HCT116 (cell line): ENCODE measurements at regions of chr15 and their contacts with region 1.

Region 1: DNA sequence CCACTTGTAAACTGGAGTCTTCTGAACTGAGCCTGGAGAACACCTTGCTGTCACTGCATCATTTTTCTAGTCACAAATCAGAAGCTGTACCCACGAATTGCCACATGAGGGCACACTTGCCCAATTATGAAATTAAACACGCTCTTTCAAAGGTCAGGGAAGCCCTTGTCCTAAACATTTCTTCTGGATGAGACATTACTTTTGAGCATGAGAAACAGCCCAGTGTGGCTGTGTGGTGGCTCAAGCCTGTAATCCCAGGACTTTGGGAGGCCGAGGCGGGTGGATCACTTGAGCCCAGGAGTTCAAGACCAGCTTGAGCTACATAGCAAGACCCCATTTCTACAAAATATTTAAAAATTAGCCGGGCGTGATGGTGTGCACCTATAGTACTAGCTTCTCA is 27.5 kb upstream of the CFAP161 start:
- DNase-seq: peak; percentile 60
- ATAC-seq: peak; percentile 81
- H3K4me3 ChIP-seq: no peak overlapping the region
- H3K27ac ChIP-seq: no peak overlapping the region
- H3K4me1 ChIP-seq: peaks cover 0 to 5% of the 10 kb centered on the region in 2 experiments; a peak in 1 of 4 replicates
- H3K27me3 ChIP-seq: peaks cover 19% of the 10 kb centered on the region
- CTCF ChIP-seq: peak; percentile 70 to 75 (median 72)
- POLR2A ChIP-seq: no peak
- RAD21 ChIP-seq: peak; percentile 87

Region 2: GRCh38 chr15:80455668-80456442 is 650.7 kb before region 1 on chr15:
- CTCF ChIA-PET with region 1: no interaction called
- POLR2A ChIA-PET with region 1: no interaction called
- RAD21 ChIA-PET with region 1: no interaction called
- intact Hi-C with region 1: loop called (anchors 5 kb)
- DNase-seq: peak; percentile 44
- ATAC-seq: peak; percentile 89
- H3K4me3 ChIP-seq: no peak overlapping the region
- H3K27ac ChIP-seq: no peak overlapping the region
- H3K4me1 ChIP-seq: peaks cover 4 to 8% of the 10 kb centered on the region in 2 experiments; a peak in 3 of 4 replicates
- H3K27me3 ChIP-seq: no peaks in the 10 kb centered on the region
- CTCF ChIP-seq: peak; percentile 88 to 95 (median 89)
- POLR2A ChIP-seq: no peak
- RAD21 ChIP-seq: peak; percentile 94

Region 3: DNA sequence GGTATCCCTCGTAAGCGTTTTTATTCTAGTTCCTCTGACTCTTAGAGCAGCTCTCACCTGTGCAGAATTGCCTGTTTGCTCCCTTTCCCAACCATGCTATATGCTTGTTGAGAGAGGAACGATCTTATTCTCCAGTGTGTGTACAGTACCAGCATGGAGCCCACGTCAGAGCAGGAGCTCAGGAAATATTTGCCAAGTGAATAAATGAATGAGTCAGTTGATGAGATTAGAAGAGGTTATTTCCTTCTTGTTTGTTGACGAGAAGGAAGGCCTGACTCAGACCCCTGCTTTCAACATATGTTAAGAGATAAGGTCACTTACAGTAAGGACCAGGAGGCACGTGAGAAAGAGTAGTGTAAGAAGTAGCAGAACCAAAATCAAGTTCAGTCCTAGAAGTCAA is 517.8 kb before region 1 on chr15:
- CTCF ChIA-PET with region 1: no interaction called
- POLR2A ChIA-PET with region 1: no interaction called
- RAD21 ChIA-PET with region 1: no interaction called
- intact Hi-C with region 1: no loop called
- DNase-seq: no peak
- ATAC-seq: no peak
- H3K4me3 ChIP-seq: no peak overlapping the region
- H3K27ac ChIP-seq: no peak overlapping the region
- H3K4me1 ChIP-seq: peaks cover 5 to 34% of the 10 kb centered on the region in 2 experiments; a peak in 3 of 4 replicates
- H3K27me3 ChIP-seq: no peaks in the 10 kb centered on the region
- CTCF ChIP-seq: no peak
- POLR2A ChIP-seq: no peak
- RAD21 ChIP-seq: no peak

Region 4: DNA sequence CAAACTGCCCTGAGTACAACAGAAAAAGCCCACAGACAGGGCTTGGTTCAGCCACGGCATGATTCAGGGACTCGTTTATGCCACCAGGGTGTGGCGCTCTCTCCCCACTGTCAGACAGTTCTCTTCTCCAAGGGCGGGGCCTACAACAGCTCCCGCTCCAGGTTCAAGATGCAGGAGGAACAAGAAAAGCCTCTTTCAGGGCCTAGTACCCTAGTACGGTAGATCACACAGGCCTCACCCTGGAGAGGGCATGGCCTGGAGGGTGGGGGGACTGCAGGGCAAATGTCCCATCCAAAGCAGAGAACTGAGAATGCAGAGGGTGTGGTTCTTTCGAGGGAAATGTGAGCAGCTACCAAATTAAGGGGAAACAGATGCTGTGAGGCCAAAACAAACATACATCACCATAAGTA is 128.9 kb before region 1 on chr15:
- CTCF ChIA-PET with region 1: interaction called, 10 read pairs
- POLR2A ChIA-PET with region 1: no interaction called
- RAD21 ChIA-PET with region 1: interaction called in 1 of 2 experiments, 3 read pairs
- intact Hi-C with region 1: loop called (anchors 1 kb)
- DNase-seq: no peak
- ATAC-seq: peak; percentile 97
- H3K4me3 ChIP-seq: no peak overlapping the region
- H3K27ac ChIP-seq: no peak overlapping the region
- H3K4me1 ChIP-seq: peaks cover 8 to 22% of the 10 kb centered on the region in 2 experiments; a peak in 2 of 4 replicates
- H3K27me3 ChIP-seq: no peaks in the 10 kb centered on the region
- CTCF ChIP-seq: peak; percentile 70 to 81 (median 72); a peak in 5 of 6 replicates
- POLR2A ChIP-seq: no peak
- RAD21 ChIP-seq: peak; percentile 82

Region 5: DNA sequence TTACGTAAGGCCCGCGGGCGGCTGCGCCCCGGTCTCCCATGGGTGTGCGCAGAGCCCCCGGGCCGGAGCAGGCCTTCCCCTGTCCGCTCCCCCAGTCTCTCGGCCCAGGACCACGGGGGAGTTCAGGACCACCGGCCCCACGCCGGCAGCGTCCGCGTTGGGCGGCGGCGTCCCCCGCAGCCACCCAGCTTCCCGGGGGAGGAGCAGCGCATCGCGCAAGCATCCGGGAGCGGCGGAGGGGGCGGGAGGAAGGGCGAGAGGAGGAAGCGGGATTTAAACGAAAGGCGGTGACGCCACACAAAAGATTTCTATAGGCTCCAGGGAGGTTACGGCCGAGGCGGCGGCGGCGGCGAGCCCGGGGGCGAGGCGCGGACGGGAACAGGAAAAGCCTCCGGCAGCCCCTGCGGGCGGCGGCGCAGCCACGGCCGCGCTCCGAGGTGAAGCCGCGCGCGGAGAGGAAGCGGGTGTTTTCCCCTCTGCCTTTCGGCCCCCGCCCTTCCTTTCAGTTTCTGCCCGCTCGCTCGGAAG is 105.9 kb before region 1 on chr15 and contains the start of gene TLNRD1:
- CTCF ChIA-PET with region 1: no interaction called
- POLR2A ChIA-PET with region 1: no interaction called
- RAD21 ChIA-PET with region 1: no interaction called
- intact Hi-C with region 1: loop called (anchors 5 kb)
- DNase-seq: peak; percentile 80
- ATAC-seq: peak; percentile 78
- H3K4me3 ChIP-seq: peak within 1 kb of the TSS; percentile 66 to 77
- H3K27ac ChIP-seq: peak within 1 kb of the TSS; percentile 90
- H3K4me1 ChIP-seq: peaks cover 15 to 36% of the 10 kb centered on the region in 2 experiments
- H3K27me3 ChIP-seq: no peaks in the 10 kb centered on the region
- CTCF ChIP-seq: no peak
- POLR2A ChIP-seq: peak; percentile 84
- RAD21 ChIP-seq: no peak
- total RNA-seq, gene TLNRD1: 22.5 TPM

Region 6: GRCh38 chr15:81091889-81092558 is 14.5 kb before region 1 on chr15:
- CTCF ChIA-PET with region 1: interaction called, 12 read pairs
- POLR2A ChIA-PET with region 1: interaction called, 3 read pairs
- RAD21 ChIA-PET with region 1: interaction called in 1 of 2 experiments, 6 read pairs
- intact Hi-C with region 1: no loop called
- DNase-seq: peak; percentile 86
- ATAC-seq: peak; percentile 95
- H3K4me3 ChIP-seq: peak overlapping the region; percentile 20 to 49
- H3K27ac ChIP-seq: peak overlapping the region; percentile 87
- H3K4me1 ChIP-seq: peaks cover 12 to 16% of the 10 kb centered on the region in 2 experiments
- H3K27me3 ChIP-seq: no peaks in the 10 kb centered on the region
- CTCF ChIP-seq: no peak
- POLR2A ChIP-seq: no peak
- RAD21 ChIP-seq: peak; percentile 36; the same call in 1 of the 2 replicates

Region 7: DNA sequence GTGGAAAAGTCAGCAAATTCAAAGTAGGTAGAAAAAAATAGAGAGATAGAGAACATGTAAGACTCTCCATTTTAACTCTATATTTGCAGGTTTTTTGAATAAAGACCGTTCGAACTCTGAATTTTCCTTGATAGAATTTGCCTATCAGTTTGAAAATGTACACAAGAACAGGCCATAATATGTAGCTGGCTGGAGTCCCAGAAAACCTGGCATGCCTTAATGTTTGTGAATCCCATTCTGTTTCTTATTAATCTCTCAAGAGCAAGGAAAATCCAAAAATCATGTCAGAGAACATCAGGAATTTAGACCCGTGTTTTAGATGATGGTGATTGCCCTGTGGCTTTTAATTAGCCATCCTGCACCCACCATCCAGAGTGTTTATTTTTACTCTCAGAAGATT is 20.3 kb after region 1 on chr15:
- CTCF ChIA-PET with region 1: no interaction called
- POLR2A ChIA-PET with region 1: no interaction called
- RAD21 ChIA-PET with region 1: no interaction called
- intact Hi-C with region 1: no loop called
- DNase-seq: no peak
- ATAC-seq: no peak
- H3K4me3 ChIP-seq: no peak overlapping the region
- H3K27ac ChIP-seq: no peak overlapping the region
- H3K4me1 ChIP-seq: no peaks in the 10 kb centered on the region
- H3K27me3 ChIP-seq: peaks cover 3% of the 10 kb centered on the region; the same call in 1 of the 2 replicates
- CTCF ChIP-seq: no peak
- POLR2A ChIP-seq: no peak
- RAD21 ChIP-seq: no peak

Region 8: DNA sequence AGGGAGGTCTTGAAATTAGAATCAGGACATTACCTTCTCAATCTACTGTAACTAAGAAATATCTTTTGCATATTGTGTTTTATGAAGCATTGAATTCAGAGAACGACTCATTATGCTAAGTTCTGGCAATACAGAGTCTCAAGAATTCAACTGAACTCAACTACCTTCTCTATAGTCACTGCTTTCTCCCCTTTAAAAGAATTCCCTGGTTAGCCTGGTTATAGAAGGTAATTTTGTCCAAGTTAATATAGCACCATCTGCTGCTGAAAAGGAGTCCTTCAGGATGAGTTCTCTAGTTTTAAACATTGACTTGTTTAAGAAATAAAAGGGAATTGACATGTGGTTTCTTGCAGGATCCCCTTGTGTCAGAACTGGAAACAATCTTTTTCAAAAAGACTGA is 150.4 kb after region 1 on chr15:
- CTCF ChIA-PET with region 1: interaction called, 6 read pairs
- POLR2A ChIA-PET with region 1: no interaction called
- RAD21 ChIA-PET with region 1: no interaction called
- intact Hi-C with region 1: loop called (anchors 1 kb)
- DNase-seq: peak; percentile 32
- ATAC-seq: peak; percentile 68
- H3K4me3 ChIP-seq: no peak overlapping the region
- H3K27ac ChIP-seq: no peak overlapping the region
- H3K4me1 ChIP-seq: no peaks in the 10 kb centered on the region
- H3K27me3 ChIP-seq: peaks cover 12% of the 10 kb centered on the region
- CTCF ChIP-seq: peak; percentile 36 to 60 (median 54)
- POLR2A ChIP-seq: no peak
- RAD21 ChIP-seq: peak; percentile 66

Region 9: DNA sequence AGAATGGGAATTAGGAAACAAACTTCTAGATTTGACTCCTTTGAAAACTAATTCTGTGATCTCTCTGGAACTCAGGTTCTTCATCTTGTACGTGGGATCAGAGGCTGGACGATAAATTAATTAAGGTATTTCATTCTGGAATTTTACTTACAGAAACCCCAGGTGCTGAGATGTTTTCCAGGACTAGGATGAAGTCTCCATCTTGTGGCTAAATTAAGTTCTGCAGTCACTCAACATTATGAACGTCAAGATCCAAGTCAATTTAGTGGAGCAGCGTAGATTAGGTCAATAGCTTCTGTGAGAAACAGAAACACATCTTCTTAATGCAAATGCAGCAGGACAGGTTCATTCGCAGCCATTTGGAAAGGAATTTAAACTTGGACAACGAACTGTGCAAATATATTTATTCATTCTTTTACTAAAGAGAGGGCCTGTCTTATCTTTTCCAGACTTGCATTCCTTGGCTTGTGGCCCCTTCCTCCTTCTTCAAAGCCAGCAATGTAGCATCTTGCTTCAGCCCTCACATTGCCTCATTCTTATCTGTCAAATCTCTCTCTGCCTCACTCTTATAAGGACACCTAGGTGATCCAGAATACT is 294.2 kb after region 1 on chr15:
- CTCF ChIA-PET with region 1: interaction called, 4 read pairs
- POLR2A ChIA-PET with region 1: no interaction called
- RAD21 ChIA-PET with region 1: no interaction called
- intact Hi-C with region 1: loop called (anchors 1 kb)
- DNase-seq: peak; percentile 52
- ATAC-seq: peak; percentile 67
- H3K4me3 ChIP-seq: no peak overlapping the region
- H3K27ac ChIP-seq: no peak overlapping the region
- H3K4me1 ChIP-seq: no peaks in the 10 kb centered on the region
- H3K27me3 ChIP-seq: no peaks in the 10 kb centered on the region
- CTCF ChIP-seq: peak; percentile 57 to 79 (median 67)
- POLR2A ChIP-seq: no peak
- RAD21 ChIP-seq: peak; percentile 85